Endothelial cell of umbilical vein (primary cell): ENCODE measurements at regions of chr5 and their contacts with region 1.

Region 1: DNA sequence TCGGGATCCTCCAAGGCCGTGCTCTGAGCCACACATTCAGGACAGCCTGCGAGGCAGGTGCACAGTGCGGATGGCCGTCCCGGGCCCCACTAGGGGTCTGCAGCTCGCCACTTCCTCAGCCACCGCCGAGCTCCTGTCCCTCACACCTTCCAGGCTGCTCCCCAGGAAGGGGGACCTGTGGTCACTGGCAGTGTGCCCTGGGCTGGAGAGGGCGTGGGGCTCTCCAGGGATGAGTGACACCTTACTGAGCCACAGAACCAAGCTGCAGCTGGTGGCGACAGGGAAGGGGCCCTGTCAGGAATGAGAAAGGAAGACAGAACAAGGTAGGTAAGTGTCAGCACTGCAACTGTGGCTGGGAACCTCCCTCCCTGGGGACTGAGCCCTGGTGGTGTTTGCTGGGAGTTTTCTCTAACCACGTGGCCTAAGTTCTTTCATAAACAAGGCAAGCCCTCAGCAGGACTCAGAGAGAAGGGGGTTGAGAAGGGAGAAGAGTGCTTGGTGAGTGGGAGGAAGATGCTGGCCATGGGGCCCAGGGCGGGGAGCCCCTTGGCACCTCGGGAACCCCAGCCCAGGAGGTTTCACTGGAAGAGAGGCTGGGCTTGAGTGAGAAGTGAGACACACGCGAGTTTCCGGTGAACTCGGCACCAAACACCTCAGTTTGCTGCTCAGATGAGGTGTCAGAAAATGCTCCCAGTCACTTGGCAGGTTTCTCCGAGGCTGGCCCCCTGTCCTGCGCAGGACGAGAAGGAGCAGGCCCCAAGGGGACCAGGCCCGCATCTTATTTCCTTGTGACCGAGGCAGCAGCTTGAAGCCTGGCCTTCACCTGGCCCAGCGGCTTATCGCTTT is 5.2 kb downstream of the IL13 start:
- DNase-seq: no peak
- H3K4me3 ChIP-seq: no peak overlapping the region
- H3K27ac ChIP-seq: no peak overlapping the region
- H3K4me1 ChIP-seq: no peaks in the 10 kb centered on the region
- H3K27me3 ChIP-seq: peaks cover 0 to 2% of the 10 kb centered on the region in 2 experiments
- CTCF ChIP-seq: no peak
- POLR2A ChIP-seq: no peak

Region 2: GRCh38 chr5:131720714-131721113 is 942.4 kb before region 1 on chr5:
- CTCF ChIA-PET with region 1: no interaction called
- POLR2A ChIA-PET with region 1: no interaction called
- dilution Hi-C with region 1: no loop called
- intact Hi-C with region 1: no loop called
- DNase-seq: peak; percentile 91
- H3K4me3 ChIP-seq: no peak overlapping the region
- H3K27ac ChIP-seq: no peak overlapping the region
- H3K4me1 ChIP-seq: no peaks in the 10 kb centered on the region
- H3K27me3 ChIP-seq: no peaks in the 10 kb centered on the region
- CTCF ChIP-seq: no peak
- POLR2A ChIP-seq: no peak

Region 3: DNA sequence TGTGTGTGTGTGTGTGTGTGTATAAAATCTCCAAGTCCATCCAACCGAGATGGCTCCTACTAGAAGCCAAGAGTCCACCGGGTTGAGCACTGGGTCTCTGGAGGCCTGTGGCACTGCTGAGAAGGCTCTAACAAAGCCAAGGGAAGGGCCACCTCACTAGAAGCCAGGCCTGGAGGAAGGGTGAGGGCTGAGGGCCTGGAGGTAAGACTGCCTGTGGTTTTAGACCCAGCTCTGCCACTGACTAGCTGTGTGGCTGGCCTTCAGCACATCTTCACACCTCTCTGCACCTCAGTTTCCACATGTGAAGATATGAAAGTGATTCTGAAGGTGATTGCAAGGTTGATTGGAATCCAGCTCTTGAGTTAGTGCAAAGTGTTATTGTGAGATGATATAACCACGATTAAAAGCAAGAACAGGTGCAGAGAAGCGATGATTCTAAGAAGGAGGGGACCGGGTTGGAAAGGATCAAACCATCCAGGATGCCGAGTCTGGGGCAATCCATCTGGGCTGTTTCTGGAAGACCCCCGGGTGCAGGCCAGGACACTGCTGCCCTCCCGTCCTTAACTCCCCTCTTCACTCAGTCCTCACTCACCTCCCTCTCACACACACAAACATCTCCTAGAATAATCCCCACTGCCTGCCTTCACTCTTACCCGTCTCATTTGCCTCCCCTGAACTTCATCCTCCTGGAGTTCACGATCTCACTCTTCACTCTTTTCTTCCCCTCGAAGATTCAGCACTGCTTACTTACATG is 13.0 kb after region 1 on chr5:
- CTCF ChIA-PET with region 1: interaction called, 4 read pairs
- POLR2A ChIA-PET with region 1: no interaction called
- dilution Hi-C with region 1: no loop called
- intact Hi-C with region 1: loop called (anchors 1 kb)
- DNase-seq: no peak
- H3K4me3 ChIP-seq: no peak overlapping the region
- H3K27ac ChIP-seq: no peak overlapping the region
- H3K4me1 ChIP-seq: peaks cover 13% of the 10 kb centered on the region
- H3K27me3 ChIP-seq: no peaks in the 10 kb centered on the region
- CTCF ChIP-seq: no peak
- POLR2A ChIP-seq: no peak

Region 4: GRCh38 chr5:133147411-133147810 is 484.3 kb after region 1 on chr5:
- CTCF ChIA-PET with region 1: no interaction called
- POLR2A ChIA-PET with region 1: no interaction called
- dilution Hi-C with region 1: no loop called
- intact Hi-C with region 1: no loop called
- DNase-seq: no peak
- H3K4me3 ChIP-seq: no peak overlapping the region
- H3K27ac ChIP-seq: no peak overlapping the region
- H3K4me1 ChIP-seq: no peaks in the 10 kb centered on the region
- H3K27me3 ChIP-seq: peaks cover 0 to 2% of the 10 kb centered on the region in 2 experiments
- CTCF ChIP-seq: no peak
- POLR2A ChIP-seq: no peak